ENCODE measurements at regions of chr1 and their contacts with region 1.

Region 1: DNA sequence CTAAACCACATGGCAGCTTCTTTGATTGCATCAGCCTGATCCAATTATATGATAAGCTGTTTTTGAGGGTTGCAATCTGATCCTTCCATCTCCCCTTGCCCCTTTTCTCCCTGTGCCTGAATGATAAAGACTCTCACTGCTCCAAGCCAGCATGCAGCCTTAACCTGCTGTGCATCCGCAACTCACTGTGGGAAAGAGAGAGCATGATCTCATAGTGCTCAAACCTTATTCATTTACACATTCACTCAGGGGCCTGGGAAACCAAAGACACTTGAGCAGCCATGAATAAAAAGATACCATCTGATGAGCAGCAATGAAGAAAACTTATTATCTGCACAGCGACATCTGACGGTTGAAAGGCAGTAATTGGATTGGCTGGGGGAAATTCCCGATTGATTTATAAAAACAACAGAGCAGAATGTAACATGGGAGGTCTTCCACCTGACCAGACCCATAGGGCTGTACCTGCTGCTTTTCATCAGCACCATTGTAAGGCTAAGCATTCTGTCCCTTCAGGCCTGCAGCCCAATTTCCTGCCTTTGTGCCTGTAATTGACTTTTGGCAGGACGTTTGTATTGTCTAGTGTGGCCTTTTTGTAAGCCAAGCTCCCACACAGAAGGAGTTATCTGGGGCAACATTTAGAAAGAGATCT is 62.5 kb downstream of the KIAA0040 start:
- DNase-seq: peak in 1 of 2 experiments; percentile 49
- H3K4me3 ChIP-seq: peak overlapping the region in 1 of 4 experiments; percentile 18; a peak in 1 of 8 replicates
- H3K27ac ChIP-seq: peak overlapping the region; percentile 89; the same call in 1 of the 2 replicates
- H3K4me1 ChIP-seq: peaks cover 0 to 26% (median 17%) of the 10 kb centered on the region in 4 experiments; a peak in 4 of 7 replicates
- H3K27me3 ChIP-seq: no peaks in the 10 kb centered on the region
- CTCF ChIP-seq: peak in 1 of 3 experiments; percentile 7; a peak in 1 of 4 replicates
- EP300 ChIP-seq: peak in 1 of 2 experiments; percentile 40; a peak in 1 of 3 replicates
- POLR2A ChIP-seq: peak in 1 of 2 experiments; percentile 31; a peak in 1 of 3 replicates
- RAD21 ChIP-seq: no peak

Region 2: DNA sequence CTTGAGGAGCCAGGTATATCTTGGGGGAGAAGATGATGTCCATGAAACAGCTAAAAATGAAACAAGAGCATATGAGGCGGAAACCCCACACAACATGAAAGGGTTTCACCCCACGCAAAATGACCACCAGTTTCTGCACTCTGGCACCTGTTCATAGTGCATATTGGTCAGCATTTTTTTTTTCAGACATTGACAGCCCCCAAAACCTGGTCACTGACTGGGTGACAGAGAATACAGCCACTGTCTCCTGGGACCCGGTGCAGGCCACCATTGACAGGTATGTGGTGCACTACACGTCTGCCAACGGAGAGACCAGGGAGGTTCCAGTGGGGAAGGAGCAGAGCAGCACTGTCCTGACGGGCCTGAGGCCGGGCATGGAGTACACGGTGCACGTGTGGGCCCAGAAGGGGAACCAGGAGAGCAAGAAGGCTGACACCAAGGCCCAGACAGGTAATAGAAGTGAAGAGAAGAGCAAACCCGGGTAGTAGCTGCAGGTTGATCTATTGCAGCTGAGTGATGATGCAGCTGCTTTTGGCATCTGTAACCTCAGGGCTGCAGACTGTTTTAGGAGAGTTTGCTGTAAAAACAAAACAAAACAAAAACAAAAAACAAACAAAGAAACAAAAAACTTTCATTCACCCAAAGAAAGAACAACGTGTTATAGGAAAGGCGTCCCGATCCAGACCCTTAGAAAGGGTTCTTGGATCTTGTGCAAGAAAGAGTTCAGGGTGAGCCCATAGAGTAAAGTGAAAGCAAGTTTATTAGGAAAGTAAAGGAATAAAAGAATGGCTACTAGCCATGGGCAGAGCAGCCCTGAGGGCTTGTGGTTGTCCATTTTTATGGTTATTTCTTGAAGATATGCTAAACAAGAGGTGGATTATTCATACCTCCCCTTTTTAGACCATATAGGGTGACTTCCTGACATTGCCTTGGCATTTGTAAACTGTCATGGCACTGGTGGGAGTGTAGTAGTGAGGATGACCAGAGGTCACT is 11.5 kb before region 1 on chr1:
- CTCF ChIA-PET with region 1: interaction called, 47 read pairs
- POLR2A ChIA-PET with region 1: interaction called, 3 read pairs
- DNase-seq: no peak
- H3K4me3 ChIP-seq: no peak overlapping the region
- H3K27ac ChIP-seq: no peak overlapping the region
- H3K4me1 ChIP-seq: no peaks in the 10 kb centered on the region
- H3K27me3 ChIP-seq: no peaks in the 10 kb centered on the region
- CTCF ChIP-seq: no peak
- EP300 ChIP-seq: no peak
- POLR2A ChIP-seq: no peak
- RAD21 ChIP-seq: no peak

Measured in H1 (cell line).